BJ (cell line): ENCODE measurements at regions of chr3 and their contacts with region 1.

Region 1: DNA sequence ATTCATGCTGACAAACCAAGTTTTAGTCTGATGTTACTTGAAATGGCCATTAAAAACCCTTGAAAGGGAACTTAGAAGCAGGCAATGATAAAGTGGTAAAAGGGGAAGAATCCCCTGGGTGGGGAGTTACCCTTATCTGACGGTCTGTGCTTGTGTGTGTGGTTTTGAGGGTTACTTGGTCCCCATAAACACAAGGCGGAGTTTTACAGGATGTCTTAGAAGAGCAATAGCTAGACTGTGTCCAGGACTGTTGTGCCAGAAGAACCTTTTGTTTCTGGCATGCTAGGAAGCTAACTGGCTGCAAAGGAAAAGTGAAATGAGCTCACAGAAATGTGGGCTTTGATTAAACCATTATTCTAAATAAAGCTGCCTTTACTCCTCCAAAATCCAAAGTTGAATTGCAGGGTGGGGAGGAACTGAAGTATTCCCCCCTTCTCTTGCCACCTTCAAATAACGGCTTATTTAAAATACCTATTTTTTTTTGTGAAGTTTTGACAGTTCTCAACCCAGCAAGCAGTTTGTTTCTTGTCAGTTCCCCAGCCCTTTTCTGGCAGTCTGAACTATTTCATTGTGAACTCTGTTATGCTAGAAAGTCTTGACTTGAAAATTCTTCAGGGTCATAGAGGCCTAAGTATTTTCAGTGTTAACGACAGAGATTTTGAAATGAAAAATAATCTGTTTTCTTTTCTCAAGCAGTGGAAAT is 443.5 kb downstream of the OTOL1 start:
- DNase-seq: no peak
- H3K4me3 ChIP-seq: no peak overlapping the region
- H3K27me3 ChIP-seq: no peaks in the 10 kb centered on the region
- CTCF ChIP-seq: no peak

Region 2: GRCh38 chr3:161619351-161619750 is 320.7 kb before region 1 on chr3:
- CTCF ChIA-PET with region 1: no interaction called
- POLR2A ChIA-PET with region 1: no interaction called
- DNase-seq: no peak
- H3K4me3 ChIP-seq: no peak overlapping the region
- H3K27me3 ChIP-seq: no peaks in the 10 kb centered on the region
- CTCF ChIP-seq: no peak

Region 3: GRCh38 chr3:161969867-161970266 is 29.8 kb after region 1 on chr3:
- CTCF ChIA-PET with region 1: no interaction called
- POLR2A ChIA-PET with region 1: interaction called, 16 read pairs
- DNase-seq: no peak
- H3K4me3 ChIP-seq: no peak overlapping the region
- H3K27me3 ChIP-seq: no peaks in the 10 kb centered on the region
- CTCF ChIP-seq: no peak